Calu3 (cell line): ENCODE measurements at regions of chr14 and their contacts with region 1.

Region 1: DNA sequence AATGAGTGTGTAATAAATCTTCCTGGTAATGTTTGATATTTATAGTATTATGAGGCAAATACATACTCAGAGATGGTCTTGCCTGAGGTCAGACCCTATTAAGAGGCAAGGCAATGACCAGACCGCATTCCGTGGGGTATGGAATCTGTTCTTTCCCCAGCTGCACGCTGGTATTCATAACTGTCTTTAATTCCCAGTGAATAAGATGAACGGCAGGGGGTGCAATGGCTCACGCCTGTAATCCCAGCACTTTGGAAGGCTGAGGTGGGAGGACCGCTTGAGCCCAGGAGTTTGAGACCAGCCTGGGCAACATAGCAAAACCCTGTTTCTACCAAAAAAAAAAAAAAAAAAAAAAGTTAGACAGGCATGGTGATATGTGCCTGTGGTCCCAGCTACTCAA is 44.6 kb downstream of the ERO1A start:
- DNase-seq: no peak
- H3K4me3 Mint-ChIP-seq: no peak overlapping the region
- H3K27ac Mint-ChIP-seq: no peak overlapping the region
- H3K4me1 Mint-ChIP-seq: no peaks in the 10 kb centered on the region
- H3K27me3 Mint-ChIP-seq: no peaks in the 10 kb centered on the region
- CTCF ChIP-seq: no peak

Region 2: GRCh38 chr14:52596320-52596719 is 54.5 kb before region 1 on chr14:
- CTCF ChIA-PET with region 1: interaction called, 14 read pairs
- intact Hi-C with region 1: no loop called
- DNase-seq: no peak
- H3K4me3 Mint-ChIP-seq: no peak overlapping the region
- H3K27ac Mint-ChIP-seq: no peak overlapping the region
- H3K4me1 Mint-ChIP-seq: no peaks in the 10 kb centered on the region
- H3K27me3 Mint-ChIP-seq: peaks cover 21% of the 10 kb centered on the region
- CTCF ChIP-seq: no peak

Region 3: GRCh38 chr14:52694761-52695480 is 44.1 kb after region 1 on chr14:
- CTCF ChIA-PET with region 1: no interaction called
- intact Hi-C with region 1: loop called (anchors 5 kb)
- DNase-seq: peak; percentile 38
- H3K4me3 Mint-ChIP-seq: peak overlapping the region; percentile 90
- H3K27ac Mint-ChIP-seq: peak overlapping the region; percentile 86
- H3K4me1 Mint-ChIP-seq: peaks cover 44% of the 10 kb centered on the region
- H3K27me3 Mint-ChIP-seq: no peaks in the 10 kb centered on the region
- CTCF ChIP-seq: no peak